HCT116 (cell line): ENCODE measurements at regions of chr5 and their contacts with region 1.

Region 1: GRCh38 chr5:150000256-150000989 is at the starts of genes HMGXB3 and TIGD6:
- DNase-seq: peak; percentile 91
- ATAC-seq: peak; percentile 91
- H3K4me3 ChIP-seq: peak within 1 kb of the TSS; percentile 95 to 98
- H3K27ac ChIP-seq: peak within 1 kb of the TSS; percentile 87
- H3K4me1 ChIP-seq: peaks cover 9 to 26% of the 10 kb centered on the region in 2 experiments; a peak in 3 of 4 replicates
- H3K27me3 ChIP-seq: no peaks in the 10 kb centered on the region
- CTCF ChIP-seq: no peak
- POLR2A ChIP-seq: no peak
- RAD21 ChIP-seq: no peak
- total RNA-seq, gene HMGXB3: 41.8 TPM
- total RNA-seq, gene TIGD6: 2.1 TPM

Region 2: GRCh38 chr5:150122158-150122510 is 121.7 kb after region 1 on chr5:
- CTCF ChIA-PET with region 1: no interaction called
- POLR2A ChIA-PET with region 1: no interaction called
- RAD21 ChIA-PET with region 1: no interaction called
- intact Hi-C with region 1: loop called (anchors 2 kb)
- DNase-seq: no peak
- ATAC-seq: peak; percentile 96
- H3K4me3 ChIP-seq: no peak overlapping the region
- H3K27ac ChIP-seq: no peak overlapping the region
- H3K4me1 ChIP-seq: peaks cover 4 to 10% of the 10 kb centered on the region in 2 experiments; a peak in 3 of 4 replicates
- H3K27me3 ChIP-seq: no peaks in the 10 kb centered on the region
- CTCF ChIP-seq: peak; percentile 58 to 68 (median 63); a peak in 5 of 6 replicates
- POLR2A ChIP-seq: no peak
- RAD21 ChIP-seq: peak; percentile 66

Region 3: DNA sequence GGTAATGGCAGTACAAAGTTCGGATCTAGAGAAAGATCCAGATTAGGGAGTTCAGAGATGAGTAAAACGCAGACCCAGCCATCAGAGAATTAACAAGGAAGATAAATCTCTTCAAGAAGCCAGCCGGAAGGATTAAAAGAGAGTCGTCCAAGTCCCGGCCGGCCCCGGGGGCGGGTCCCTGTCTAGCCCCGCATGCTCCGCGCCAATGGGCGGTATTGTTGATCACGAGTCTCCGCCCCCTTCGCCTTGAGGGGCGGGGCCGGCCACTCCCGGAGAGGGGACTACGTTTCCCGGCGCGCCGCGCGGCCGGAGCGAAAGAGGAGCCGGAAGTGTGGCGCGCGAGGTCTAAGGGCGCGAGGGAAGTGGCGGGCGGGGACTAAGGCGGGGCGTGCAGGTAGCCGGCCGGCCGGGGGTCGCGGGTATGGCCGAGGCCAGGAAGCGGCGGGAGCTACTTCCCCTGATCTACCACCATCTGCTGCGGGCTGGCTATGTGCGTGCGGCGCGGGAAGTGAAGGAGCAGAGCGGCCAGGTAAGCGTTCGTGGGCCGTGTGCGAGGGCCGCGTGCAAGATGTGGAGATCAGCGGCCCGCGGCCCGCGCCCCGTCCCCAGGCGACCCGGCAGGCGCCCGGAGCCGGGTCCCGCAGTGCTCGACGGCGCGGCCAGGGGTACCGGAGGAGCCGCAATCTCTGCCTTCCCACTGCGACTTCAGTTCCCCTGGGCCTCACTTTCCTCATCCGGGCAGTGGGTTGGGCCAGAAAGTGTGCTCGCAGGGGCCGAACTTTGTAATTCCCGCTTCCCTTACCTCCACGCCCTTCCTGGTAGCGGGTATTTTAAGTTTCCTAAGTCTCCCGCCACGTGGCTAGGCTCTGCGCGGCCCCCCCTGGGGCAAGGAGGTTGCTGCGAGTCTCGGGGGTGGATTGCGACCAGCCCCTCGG is 357.2 kb after region 1 on chr5 and contains the start of gene TCOF1:
- CTCF ChIA-PET with region 1: no interaction called
- POLR2A ChIA-PET with region 1: no interaction called
- RAD21 ChIA-PET with region 1: no interaction called
- intact Hi-C with region 1: loop called (anchors 10 kb)
- DNase-seq: peak; percentile 88
- ATAC-seq: peak; percentile 95
- H3K4me3 ChIP-seq: peak within 1 kb of the TSS; percentile 94 to 95
- H3K27ac ChIP-seq: peak within 1 kb of the TSS; percentile 74
- H3K4me1 ChIP-seq: peaks cover 3 to 13% of the 10 kb centered on the region in 2 experiments; a peak in 3 of 4 replicates
- H3K27me3 ChIP-seq: no peaks in the 10 kb centered on the region
- CTCF ChIP-seq: no peak
- POLR2A ChIP-seq: peak; percentile 39
- RAD21 ChIP-seq: no peak
- total RNA-seq, gene TCOF1: 94.7 TPM